ENCODE measurements at regions of chr7 and their contacts with region 1.

Region 1: GRCh38 chr7:70193514-70193913 is 595.2 kb downstream of the AUTS2 start:
- DNase-seq: peak in 2 of 9 experiments; percentile 15 to 34
- ATAC-seq: no peak
- H3K4me3 ChIP-seq: no peak overlapping the region
- H3K4me3 Mint-ChIP-seq: no peak overlapping the region
- H3K27ac ChIP-seq: no peak overlapping the region
- H3K27ac Mint-ChIP-seq: no peak overlapping the region
- H3K4me1 ChIP-seq: no peaks in the 10 kb centered on the region
- H3K4me1 Mint-ChIP-seq: no peaks in the 10 kb centered on the region
- H3K27me3 ChIP-seq: no peaks in the 10 kb centered on the region
- H3K27me3 Mint-ChIP-seq: no peaks in the 10 kb centered on the region
- CTCF ChIP-seq: no peak

Region 2: GRCh38 chr7:70700055-70700940 is 506.8 kb after region 1 on chr7:
- CTCF ChIA-PET with region 1: interaction called, 4 read pairs
- POLR2A ChIA-PET with region 1: no interaction called
- intact Hi-C with region 1: loop called in 1 of 2 experiments (anchors 5 kb)
- DNase-seq: no peak
- ATAC-seq: no peak
- H3K4me3 ChIP-seq: no peak overlapping the region
- H3K4me3 Mint-ChIP-seq: no peak overlapping the region
- H3K27ac ChIP-seq: no peak overlapping the region
- H3K27ac Mint-ChIP-seq: no peak overlapping the region
- H3K4me1 ChIP-seq: peaks cover 8% of the 10 kb centered on the region
- H3K4me1 Mint-ChIP-seq: peaks cover 23% of the 10 kb centered on the region
- H3K27me3 ChIP-seq: no peaks in the 10 kb centered on the region
- H3K27me3 Mint-ChIP-seq: peaks cover 20% of the 10 kb centered on the region
- CTCF ChIP-seq: no peak

Measured in CD8-positive, alpha-beta T cell (primary cell).